HAP-1 (cell line): ENCODE measurements at regions of chr20 and their contacts with region 1.

Region 1: DNA sequence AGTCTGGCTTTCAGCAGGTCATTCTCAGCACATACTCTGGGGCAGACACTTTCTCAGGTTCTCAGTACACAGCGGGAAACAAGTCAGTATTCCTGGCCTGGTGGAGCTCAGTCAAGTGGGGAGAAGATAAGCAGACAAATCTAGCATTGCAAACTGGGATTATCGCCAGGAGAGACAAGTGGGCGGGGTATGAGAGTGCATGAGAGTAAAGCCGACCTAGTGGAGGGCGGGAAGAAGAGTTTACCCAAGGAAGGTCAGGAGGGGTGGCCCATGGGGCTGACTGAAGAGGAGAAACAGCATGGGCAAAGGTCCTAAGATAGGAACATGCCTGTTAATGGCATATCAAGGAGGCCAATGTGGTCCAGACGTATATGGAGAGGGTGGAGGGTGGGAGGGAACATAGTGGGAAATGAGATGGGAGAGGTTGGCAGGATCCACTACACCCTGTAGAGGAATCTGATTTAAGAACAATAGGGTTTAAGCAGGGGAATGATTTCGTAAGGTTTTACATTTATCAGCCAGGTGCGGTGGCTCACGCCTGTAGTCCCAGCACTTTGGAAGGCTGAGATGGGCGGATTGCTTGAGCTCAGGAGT is 12.4 kb upstream of the CSNK2A1 start:
- DNase-seq: peak in 1 of 2 experiments; percentile 36
- H3K4me3 ChIP-seq: no peak overlapping the region
- H3K4me1 ChIP-seq: no peaks in the 10 kb centered on the region
- H3K27me3 ChIP-seq: peaks cover 16% of the 10 kb centered on the region

Region 2: GRCh38 chr20:354298-355064 is 201.5 kb before region 1 on chr20:
- in situ Hi-C with region 1: no loop called
- DNase-seq: peak; percentile 85
- H3K4me3 ChIP-seq: no peak overlapping the region
- H3K4me1 ChIP-seq: no peaks in the 10 kb centered on the region
- H3K27me3 ChIP-seq: no peaks in the 10 kb centered on the region

Region 3: GRCh38 chr20:588932-589672 is 33.1 kb after region 1 on chr20:
- in situ Hi-C with region 1: no loop called
- DNase-seq: no peak
- H3K4me3 ChIP-seq: no peak overlapping the region
- H3K4me1 ChIP-seq: no peaks in the 10 kb centered on the region
- H3K27me3 ChIP-seq: peaks cover 6% of the 10 kb centered on the region; the same call in 1 of the 2 replicates

Region 4: GRCh38 chr20:645318-646106 is 89.5 kb after region 1 on chr20:
- in situ Hi-C with region 1: loop called (anchors 5 kb)
- DNase-seq: peak; percentile 76 to 86
- H3K4me3 ChIP-seq: no peak overlapping the region
- H3K4me1 ChIP-seq: no peaks in the 10 kb centered on the region
- H3K27me3 ChIP-seq: no peaks in the 10 kb centered on the region

Region 5: DNA sequence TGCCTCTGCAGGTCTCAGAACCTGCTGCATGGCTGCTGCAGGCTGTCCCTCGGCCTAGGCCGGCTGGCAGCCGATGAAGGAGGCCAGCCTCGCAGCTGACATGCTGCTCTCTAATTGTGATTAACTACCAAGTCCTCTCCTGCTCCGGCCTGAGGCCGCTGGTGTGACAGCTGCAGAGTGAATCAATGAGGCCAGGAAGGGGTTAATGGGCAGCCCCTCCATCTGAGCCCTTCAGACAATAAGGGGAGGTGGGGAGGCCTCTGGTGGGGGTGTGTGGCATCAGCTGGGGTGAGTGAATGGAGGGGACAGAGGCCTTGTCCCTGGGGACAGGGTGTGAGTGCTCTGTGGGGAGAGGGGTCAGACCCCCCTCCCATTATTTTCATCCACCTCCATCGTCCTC is 177.8 kb after region 1 on chr20:
- in situ Hi-C with region 1: loop called (anchors 5 kb)
- DNase-seq: no peak
- H3K4me3 ChIP-seq: no peak overlapping the region
- H3K4me1 ChIP-seq: no peaks in the 10 kb centered on the region
- H3K27me3 ChIP-seq: no peaks in the 10 kb centered on the region

Region 6: DNA sequence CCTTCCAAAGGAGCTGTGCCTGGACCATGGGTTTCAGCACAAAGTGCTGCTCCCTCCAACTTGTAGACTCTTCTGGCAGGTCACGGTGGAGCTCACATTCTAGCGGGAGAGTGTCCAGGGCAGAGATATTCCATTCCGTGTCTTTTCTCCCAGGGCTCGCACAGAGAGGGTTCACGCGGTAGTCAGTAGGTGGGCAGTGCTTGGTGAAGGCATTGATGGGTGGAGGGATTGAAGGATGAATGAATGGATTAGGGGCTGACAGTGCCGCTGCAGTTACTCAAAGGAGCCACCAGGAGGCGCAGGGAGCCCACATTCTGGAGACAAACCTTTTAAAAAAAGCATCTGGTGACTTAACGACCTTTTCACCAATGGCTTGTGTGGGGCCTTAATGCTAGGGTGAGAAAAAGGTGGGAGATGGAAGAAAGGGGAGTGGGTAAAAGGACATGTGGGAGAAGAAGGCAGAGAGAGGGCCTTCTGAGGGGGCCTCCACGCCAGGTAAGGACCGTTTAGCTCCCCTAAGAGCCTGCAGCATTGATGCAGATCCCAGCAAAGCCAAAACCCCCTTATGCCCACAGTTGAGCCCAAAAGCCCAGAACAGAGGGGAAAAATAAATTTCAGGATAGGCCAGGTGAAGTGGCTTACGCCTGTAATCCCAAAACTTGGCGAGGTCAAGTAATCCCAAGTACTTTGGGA is 260.0 kb after region 1 on chr20:
- in situ Hi-C with region 1: no loop called
- DNase-seq: peak; percentile 64 to 75
- H3K4me3 ChIP-seq: no peak overlapping the region
- H3K4me1 ChIP-seq: no peaks in the 10 kb centered on the region
- H3K27me3 ChIP-seq: no peaks in the 10 kb centered on the region; the same call in 1 of the 2 replicates